Gastrocnemius medialis (tissue), 4 donors: ENCODE measurements at regions of chr15 and their contacts with region 1.

Region 1: DNA sequence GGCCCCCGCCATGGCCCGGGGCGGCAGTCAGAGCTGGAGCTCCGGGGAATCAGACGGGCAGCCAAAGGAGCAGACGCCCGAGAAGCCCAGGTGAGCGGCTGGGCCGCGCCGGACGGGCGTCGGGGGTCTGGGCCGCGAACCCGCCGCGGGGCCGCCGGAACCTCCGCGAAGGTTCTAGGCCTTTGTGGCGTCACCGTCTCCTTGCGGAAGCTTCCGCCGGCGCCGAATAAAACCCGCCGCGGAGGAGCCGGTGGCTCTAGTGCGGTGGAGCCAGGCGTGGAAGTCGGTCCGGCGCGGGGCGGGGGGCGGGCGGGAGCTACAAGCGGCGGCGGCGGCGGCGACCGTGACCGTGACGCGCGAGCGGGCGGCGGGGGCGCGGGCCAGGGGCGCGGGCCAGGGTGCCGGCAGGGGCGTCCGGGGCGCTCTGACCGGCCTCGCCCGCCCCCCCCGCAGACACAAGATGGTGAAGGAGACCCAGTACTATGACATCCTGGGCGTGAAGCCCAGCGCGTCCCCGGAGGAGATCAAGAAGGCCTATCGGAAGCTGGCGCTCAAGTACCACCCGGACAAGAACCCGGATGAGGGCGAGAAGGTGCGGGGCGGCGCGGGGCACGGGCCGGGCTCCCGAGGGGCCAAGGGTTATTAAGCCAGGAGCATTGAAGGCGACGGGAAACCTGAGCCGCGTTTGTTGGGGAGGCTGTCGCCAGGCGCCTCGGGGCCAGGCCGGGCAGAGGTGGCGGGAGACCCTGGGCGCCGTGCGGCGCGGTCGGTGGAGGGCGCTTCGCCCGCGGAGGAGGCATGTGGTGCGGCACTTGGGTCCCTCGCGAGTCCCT is at the start of gene DNAJA4:
- DNase-seq: peak; percentile 27 to 72
- ATAC-seq: peak; percentile 25 to 30
- H3K4me3 ChIP-seq: peak within 1 kb of the TSS; percentile 73 to 86 (median 82)
- H3K27ac ChIP-seq: peak within 1 kb of the TSS; percentile 90 to 96 (median 94)
- H3K4me1 ChIP-seq: peaks cover 35 to 40% of the 10 kb centered on the region in 2 donors
- H3K27me3 ChIP-seq: no peaks in the 10 kb centered on the region
- CTCF ChIP-seq: peak in 2 of 5 experiments; percentile 24 to 27
- POLR2A ChIP-seq: peak; percentile 39 to 46
- total RNA-seq, gene DNAJA4: 13.7 to 120 (median 37.8) TPM

Region 2: DNA sequence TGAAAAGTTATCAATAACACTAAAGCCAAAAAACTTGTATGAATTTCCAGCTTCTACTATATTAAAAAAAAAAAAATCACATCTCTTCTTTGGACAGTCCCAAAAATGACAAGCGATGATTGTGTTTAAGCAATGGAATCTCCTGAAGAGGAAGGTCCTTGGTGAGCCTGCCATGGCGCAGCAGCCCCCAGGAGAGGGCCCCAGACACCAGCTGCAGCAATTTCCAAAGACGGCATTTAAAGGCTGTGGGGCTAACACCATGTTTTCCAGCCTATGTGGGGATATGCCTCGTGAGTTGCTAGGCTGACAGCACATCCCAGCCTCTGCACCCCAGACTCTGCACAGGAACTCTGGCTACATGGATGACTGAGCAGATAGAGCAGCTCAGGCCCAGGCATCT is 20.2 kb after region 1 on chr15:
- in situ Hi-C with region 1: no loop called
- intact Hi-C with region 1: no loop called
- DNase-seq: no peak
- ATAC-seq: no peak
- H3K4me3 ChIP-seq: no peak overlapping the region
- H3K27ac ChIP-seq: no peak overlapping the region
- H3K4me1 ChIP-seq: no peaks in the 10 kb centered on the region
- H3K27me3 ChIP-seq: no peaks in the 10 kb centered on the region
- CTCF ChIP-seq: no peak
- POLR2A ChIP-seq: no peak

Region 3: GRCh38 chr15:78299101-78299930 is 34.8 kb after region 1 on chr15 and contains the start of gene SKIC8:
- in situ Hi-C with region 1: no loop called
- intact Hi-C with region 1: loop called (anchors 2 kb)
- DNase-seq: peak; percentile 80 to 91
- ATAC-seq: peak; percentile 92 to 95
- H3K4me3 ChIP-seq: peak within 1 kb of the TSS; percentile 74 to 98 (median 92)
- H3K27ac ChIP-seq: peak within 1 kb of the TSS; percentile 84 to 88 (median 85)
- H3K4me1 ChIP-seq: peaks cover 16 to 19% of the 10 kb centered on the region in 2 donors
- H3K27me3 ChIP-seq: no peaks in the 10 kb centered on the region
- CTCF ChIP-seq: no peak
- POLR2A ChIP-seq: peak; percentile 78 to 85
- total RNA-seq, gene SKIC8: 36.9 to 48.6 (median 42.7) TPM

Region 4: GRCh38 chr15:78399091-78399490 is 134.6 kb after region 1 on chr15:
- in situ Hi-C with region 1: no loop called
- intact Hi-C with region 1: no loop called
- DNase-seq: no peak
- ATAC-seq: no peak
- H3K4me3 ChIP-seq: no peak overlapping the region
- H3K27ac ChIP-seq: no peak overlapping the region
- H3K4me1 ChIP-seq: no peaks in the 10 kb centered on the region
- H3K27me3 ChIP-seq: no peaks in the 10 kb centered on the region
- CTCF ChIP-seq: no peak
- POLR2A ChIP-seq: no peak